Esophagus muscularis mucosa (tissue), 4 donors: ENCODE measurements at regions of chrX and their contacts with region 1.

Region 1: GRCh38 chrX:1453951-1454785 is 1.5 kb upstream of the ASMTL start:
- DNase-seq: peak; percentile 97
- H3K4me3 ChIP-seq: peak overlapping the region; percentile 74 to 99 (median 98)
- H3K27ac ChIP-seq: peak overlapping the region; percentile 86 to 96 (median 94)
- H3K4me1 ChIP-seq: peaks cover 14 to 37% (median 23%) of the 10 kb centered on the region in 4 donors
- H3K27me3 ChIP-seq: no peaks in the 10 kb centered on the region
- CTCF ChIP-seq: peak; percentile 92 to 100 (median 95)
- EP300 ChIP-seq: no peak
- POLR2A ChIP-seq: no peak

Region 2: DNA sequence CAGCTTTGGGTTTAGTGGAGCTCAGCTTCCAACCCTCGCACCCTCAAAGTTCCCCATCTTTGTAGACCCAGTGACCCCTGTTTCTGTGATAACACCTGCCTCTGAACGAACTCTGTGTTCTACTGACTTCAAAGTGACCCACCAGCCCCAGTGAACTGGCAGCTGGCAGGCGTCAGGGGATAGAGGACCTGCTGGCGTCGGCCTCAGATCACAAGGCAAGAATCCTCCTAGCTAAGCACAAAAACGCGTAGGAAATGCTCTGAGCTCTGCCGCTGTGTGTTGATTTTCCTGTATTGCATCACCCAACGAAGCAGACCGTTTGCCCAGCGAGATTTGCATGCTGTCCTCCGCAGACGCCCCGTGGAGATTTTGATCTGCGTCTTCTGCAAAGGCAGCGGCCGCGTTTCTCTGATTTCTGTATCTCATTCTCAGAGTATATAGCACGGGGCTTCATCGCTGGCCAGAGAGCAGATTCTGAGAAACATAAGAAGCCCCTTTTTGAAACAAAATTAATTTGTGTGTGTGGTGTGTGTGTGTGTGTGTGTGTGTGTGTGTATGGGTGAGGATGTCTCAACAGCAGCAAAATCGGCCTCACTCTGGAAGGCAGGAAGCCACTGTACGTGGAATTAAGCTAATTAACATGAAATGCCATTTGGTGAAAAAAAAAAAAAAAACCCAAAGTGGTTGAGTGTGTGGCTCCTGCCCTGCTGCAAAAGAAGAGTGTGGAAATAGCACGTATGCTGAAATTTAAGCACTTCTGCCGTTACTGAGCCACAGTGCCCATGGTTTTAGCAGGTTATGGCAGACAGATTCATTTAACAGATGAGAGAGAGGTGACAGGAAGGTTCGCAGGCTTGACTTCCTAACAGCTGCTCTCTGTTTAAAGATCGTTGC is 27.7 kb after region 1 on chrX:
- intact Hi-C with region 1: no loop called
- DNase-seq: peak; percentile 93
- H3K4me3 ChIP-seq: peak overlapping the region in 1 of 4 donors; percentile 5
- H3K27ac ChIP-seq: peak overlapping the region; percentile 23 to 59 (median 46)
- H3K4me1 ChIP-seq: peaks cover 0 to 8% (median 5%) of the 10 kb centered on the region in 4 donors
- H3K27me3 ChIP-seq: peaks cover 0 to 32% (median 0%) of the 10 kb centered on the region in 4 donors
- CTCF ChIP-seq: peak in 1 of 3 experiments; percentile 3
- EP300 ChIP-seq: no peak
- POLR2A ChIP-seq: no peak

Region 3: GRCh38 chrX:1576201-1576992 is 122.2 kb after region 1 on chrX:
- intact Hi-C with region 1: loop called (anchors 5 kb)
- DNase-seq: peak; percentile 81
- H3K4me3 ChIP-seq: no peak overlapping the region
- H3K27ac ChIP-seq: no peak overlapping the region
- H3K4me1 ChIP-seq: no peaks in the 10 kb centered on the region
- H3K27me3 ChIP-seq: peaks cover 0 to 12% (median 3%) of the 10 kb centered on the region in 4 donors
- CTCF ChIP-seq: no peak
- EP300 ChIP-seq: no peak
- POLR2A ChIP-seq: no peak

Region 4: DNA sequence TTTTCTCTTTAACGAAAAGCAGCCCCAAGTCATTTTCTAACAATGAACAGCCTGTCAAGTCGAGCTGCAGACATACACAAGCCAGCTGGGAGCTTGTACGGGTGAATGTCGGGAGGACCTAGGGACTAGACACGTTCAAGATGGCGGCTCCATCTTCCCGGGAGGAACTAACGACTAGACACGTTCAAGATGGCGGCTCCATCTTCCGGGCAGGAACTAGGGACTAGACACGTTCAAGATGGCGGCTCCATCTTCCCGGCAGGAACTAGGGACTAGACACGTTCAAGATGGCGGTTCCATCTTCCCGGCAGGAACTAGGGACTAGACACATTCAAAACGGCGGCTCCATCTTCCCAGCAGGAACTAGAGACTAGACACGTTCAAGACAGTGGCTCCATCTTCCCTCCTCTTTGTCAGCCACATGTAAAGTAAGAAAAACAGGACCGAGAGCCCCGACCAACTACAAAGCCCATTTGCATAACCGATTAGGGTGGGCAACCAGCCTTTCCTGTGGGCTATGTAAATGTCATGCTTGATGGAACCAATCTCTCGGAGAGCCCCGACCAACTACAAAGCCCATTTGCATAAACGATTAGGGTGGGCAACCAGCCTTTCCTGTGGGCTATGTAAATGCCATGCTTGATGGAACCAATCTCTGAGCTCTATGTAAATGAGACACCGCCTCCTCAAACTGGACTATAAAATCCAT is 871.1 kb after region 1 on chrX:
- intact Hi-C with region 1: loop called (anchors 10 kb)
- DNase-seq: no peak
- H3K4me3 ChIP-seq: peak overlapping the region; percentile 25 to 67 (median 50)
- H3K27ac ChIP-seq: peak overlapping the region in 3 of 4 donors; percentile 49 to 75 (median 73)
- H3K4me1 ChIP-seq: peaks cover 0 to 17% (median 10%) of the 10 kb centered on the region in 4 donors
- H3K27me3 ChIP-seq: no peaks in the 10 kb centered on the region
- CTCF ChIP-seq: no peak
- EP300 ChIP-seq: no peak
- POLR2A ChIP-seq: no peak

Region 5: DNA sequence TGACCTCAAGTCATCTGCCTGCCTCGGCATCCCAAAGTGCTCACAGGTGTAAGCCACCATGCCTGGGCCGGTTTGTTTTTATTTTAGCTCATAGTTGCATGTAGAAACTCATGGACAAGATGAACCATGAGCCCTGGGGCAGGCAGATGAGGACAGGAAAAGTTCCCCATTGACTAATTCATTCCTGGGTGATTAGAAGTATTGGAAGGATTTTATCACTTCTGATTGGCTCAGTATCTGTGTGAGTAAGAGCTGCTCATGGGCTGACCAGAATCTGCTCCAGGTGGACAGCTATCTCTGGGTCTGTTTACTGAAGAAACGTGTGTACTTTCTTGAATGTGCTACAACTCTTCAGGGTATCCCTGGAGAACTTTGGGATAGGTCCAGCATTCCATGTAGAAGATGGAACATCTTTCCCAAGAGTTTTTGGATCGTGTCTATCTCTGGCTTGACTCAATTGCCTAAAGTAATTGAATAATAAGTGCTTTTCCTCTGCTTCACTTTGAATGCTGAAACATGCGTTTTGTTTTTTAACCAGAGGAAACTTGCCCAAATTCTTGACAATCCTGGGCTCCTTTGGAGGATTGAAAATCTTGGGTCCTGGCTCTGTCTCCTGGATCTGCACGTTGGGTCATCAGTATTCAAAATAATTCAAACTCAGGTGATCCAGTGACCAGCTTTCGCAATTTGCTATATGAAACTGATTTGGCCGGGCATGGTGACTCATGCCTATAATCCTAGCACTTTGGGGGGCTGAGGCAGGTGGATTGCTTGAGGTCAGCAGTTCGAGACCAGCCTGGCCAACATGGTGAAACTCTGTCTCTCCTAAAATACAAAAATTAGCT is 1135.2 kb after region 1 on chrX:
- intact Hi-C with region 1: loop called (anchors 5 kb)
- DNase-seq: no peak
- H3K4me3 ChIP-seq: no peak overlapping the region
- H3K27ac ChIP-seq: no peak overlapping the region
- H3K4me1 ChIP-seq: peaks cover 0 to 13% (median 6%) of the 10 kb centered on the region in 4 donors
- H3K27me3 ChIP-seq: peaks cover 0 to 15% (median 2%) of the 10 kb centered on the region in 4 donors
- CTCF ChIP-seq: no peak
- EP300 ChIP-seq: no peak
- POLR2A ChIP-seq: no peak

Region 6: GRCh38 chrX:2690856-2691542 is 1236.8 kb after region 1 on chrX and contains the start of gene CD99:
- intact Hi-C with region 1: loop called (anchors 10 kb)
- DNase-seq: peak; percentile 98
- H3K4me3 ChIP-seq: peak within 1 kb of the TSS; percentile 79 to 95 (median 86)
- H3K27ac ChIP-seq: peak within 1 kb of the TSS; percentile 85 to 93 (median 88)
- H3K4me1 ChIP-seq: peaks cover 35 to 46% (median 45%) of the 10 kb centered on the region in 4 donors
- H3K27me3 ChIP-seq: no peaks in the 10 kb centered on the region
- CTCF ChIP-seq: peak in 1 of 3 experiments; percentile 2
- EP300 ChIP-seq: no peak
- POLR2A ChIP-seq: peak; percentile 79
- total RNA-seq, gene CD99: 311 to 469 (median 376) TPM